Spleen (tissue), 13 donors: ENCODE measurements at regions of chr11 and their contacts with region 1.

Region 1: GRCh38 chr11:62374801-62375200 is 37.6 kb downstream of the ASRGL1 start:
- DNase-seq: no peak
- H3K4me3 ChIP-seq: no peak overlapping the region
- H3K27ac ChIP-seq: no peak overlapping the region
- H3K4me1 ChIP-seq: peaks cover 0 to 18% (median 7%) of the 10 kb centered on the region in 6 donors
- H3K27me3 ChIP-seq: no peaks in the 10 kb centered on the region
- CTCF ChIP-seq: no peak
- POLR2A ChIP-seq: no peak

Region 2: GRCh38 chr11:62340269-62340901 is 34.4 kb before region 1 on chr11:
- intact Hi-C with region 1: loop called (anchors 5 kb)
- DNase-seq: peak; percentile 81
- H3K4me3 ChIP-seq: peak overlapping the region in 1 of 8 donors; percentile 1
- H3K27ac ChIP-seq: peak overlapping the region in 6 of 8 donors; percentile 3 to 52 (median 31)
- H3K4me1 ChIP-seq: peaks cover 0 to 56% (median 32%) of the 10 kb centered on the region in 6 donors
- H3K27me3 ChIP-seq: peaks cover 0 to 4% (median 0%) of the 10 kb centered on the region in 7 donors
- CTCF ChIP-seq: peak; percentile 21 to 77 (median 70)
- POLR2A ChIP-seq: no peak